Mucosa of descending colon (tissue), 3 donors: ENCODE measurements at regions of chr12 and their contacts with region 1.

Region 1: DNA sequence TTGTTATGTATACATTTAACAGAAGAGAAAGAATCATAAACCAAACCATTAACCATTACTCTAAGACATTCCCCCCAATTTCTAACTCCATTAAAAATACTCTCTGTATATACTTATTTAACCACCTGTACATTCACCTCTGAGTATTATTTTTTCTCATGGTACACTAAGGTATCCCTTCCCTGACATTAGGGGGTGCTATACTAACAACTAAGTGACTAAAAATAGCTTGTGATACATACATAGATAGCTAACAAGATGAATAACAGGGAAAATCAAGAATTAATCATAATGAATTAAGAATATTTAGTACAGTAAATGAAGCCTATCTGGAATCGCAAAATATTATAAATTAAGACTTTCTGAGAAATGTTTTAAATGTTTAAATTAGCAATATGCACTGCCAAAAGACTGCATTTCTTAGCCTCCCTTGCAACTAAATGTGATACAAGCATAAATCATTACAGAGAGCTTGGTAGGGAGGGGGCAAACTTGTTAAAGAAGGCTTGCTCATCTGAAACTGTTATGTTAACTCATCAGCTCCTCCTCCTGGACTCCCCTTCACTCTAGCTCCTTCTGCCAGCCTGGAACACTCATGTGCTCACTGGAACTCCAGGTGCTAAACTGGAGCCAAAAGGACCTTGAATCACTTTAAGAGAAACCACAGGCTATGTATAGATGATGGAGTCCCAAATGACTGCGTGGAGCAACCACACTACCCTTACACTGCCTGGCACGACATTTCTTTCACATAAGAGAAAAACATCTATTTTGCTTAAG is 14.9 kb downstream of the C2CD5 start:
- DNase-seq: no peak
- ATAC-seq: peak; percentile 73
- H3K4me3 ChIP-seq: no peak overlapping the region
- H3K4me1 ChIP-seq: no peaks in the 10 kb centered on the region
- CTCF ChIP-seq: no peak

Region 2: GRCh38 chr12:22409377-22410164 is 119.9 kb before region 1 on chr12:
- intact Hi-C with region 1: no loop called
- DNase-seq: peak in 1 of 3 donors; percentile 21
- ATAC-seq: peak; percentile 79
- H3K4me3 ChIP-seq: no peak overlapping the region
- H3K4me1 ChIP-seq: no peaks in the 10 kb centered on the region
- CTCF ChIP-seq: no peak

Region 3: GRCh38 chr12:22631863-22632463 is 102.5 kb after region 1 on chr12:
- intact Hi-C with region 1: loop called in 1 of 2 experiments (anchors 5 kb)
- DNase-seq: no peak
- ATAC-seq: no peak
- H3K4me3 ChIP-seq: no peak overlapping the region
- H3K4me1 ChIP-seq: peaks cover 22% of the 10 kb centered on the region
- CTCF ChIP-seq: no peak